Caco-2 (cell line): ENCODE measurements at regions of chr12 and their contacts with region 1.

Region 1: GRCh38 chr12:63103494-63104131 is 47.4 kb downstream of the AVPR1A start:
- DNase-seq: peak in 1 of 2 experiments; percentile 31
- H3K4me3 ChIP-seq: no peak overlapping the region
- H3K4me3 Mint-ChIP-seq: no peak overlapping the region
- H3K27ac Mint-ChIP-seq: no peak overlapping the region
- H3K4me1 ChIP-seq: no peaks in the 10 kb centered on the region
- H3K4me1 Mint-ChIP-seq: no peaks in the 10 kb centered on the region
- H3K27me3 ChIP-seq: no peaks in the 10 kb centered on the region
- H3K27me3 Mint-ChIP-seq: no peaks in the 10 kb centered on the region
- CTCF ChIP-seq: peak; percentile 60 to 84

Region 2: DNA sequence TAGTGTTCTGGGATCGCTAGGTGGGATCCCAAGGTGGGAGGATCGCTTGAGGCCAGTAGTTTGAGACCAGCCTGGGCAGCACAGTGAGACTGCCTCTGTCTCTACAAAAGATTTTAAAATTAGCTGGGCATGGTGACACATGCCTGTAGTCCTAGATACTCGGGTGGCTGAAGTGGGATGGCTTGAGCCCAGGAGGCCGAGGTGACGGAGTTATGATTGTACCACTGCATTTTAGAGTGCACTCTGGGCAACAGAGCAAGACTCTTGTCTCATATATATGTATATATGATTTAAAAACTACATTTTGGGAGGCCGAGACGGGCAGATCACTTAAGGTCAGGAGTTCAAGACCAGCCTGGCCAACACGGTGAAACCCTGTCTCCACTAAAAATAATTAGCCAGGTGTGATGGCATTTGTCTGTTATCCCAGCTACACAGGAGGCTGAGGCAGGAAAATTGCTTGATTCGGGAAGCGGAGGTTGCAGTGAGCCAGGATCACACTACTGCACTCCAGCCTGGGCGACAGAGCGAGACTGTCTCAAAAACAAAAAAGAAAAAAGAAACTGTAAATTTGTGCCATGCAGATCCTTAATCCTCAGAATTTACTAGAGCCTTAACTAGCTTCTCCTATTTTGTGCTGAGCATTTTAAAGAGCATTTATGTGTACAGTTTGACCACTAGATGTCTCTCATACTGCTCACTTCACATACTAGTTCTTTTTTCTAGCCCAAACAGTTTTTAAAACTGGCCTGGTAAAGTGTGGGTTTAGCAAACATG is 522.1 kb before region 1 on chr12:
- CTCF ChIA-PET with region 1: no interaction called
- POLR2A ChIA-PET with region 1: no interaction called
- intact Hi-C with region 1: loop called (anchors 5 kb)
- DNase-seq: peak in 1 of 2 experiments; percentile 14
- H3K4me3 ChIP-seq: no peak overlapping the region
- H3K4me3 Mint-ChIP-seq: no peak overlapping the region
- H3K27ac Mint-ChIP-seq: no peak overlapping the region
- H3K4me1 ChIP-seq: no peaks in the 10 kb centered on the region
- H3K4me1 Mint-ChIP-seq: peaks cover 7% of the 10 kb centered on the region
- H3K27me3 ChIP-seq: no peaks in the 10 kb centered on the region
- H3K27me3 Mint-ChIP-seq: no peaks in the 10 kb centered on the region
- CTCF ChIP-seq: peak; percentile 37 to 75

Region 3: GRCh38 chr12:63068857-63069442 is 34.7 kb before region 1 on chr12:
- CTCF ChIA-PET with region 1: no interaction called
- POLR2A ChIA-PET with region 1: no interaction called
- intact Hi-C with region 1: loop called (anchors 2 kb)
- DNase-seq: peak in 1 of 2 experiments; percentile 39
- H3K4me3 ChIP-seq: no peak overlapping the region
- H3K4me3 Mint-ChIP-seq: no peak overlapping the region
- H3K27ac Mint-ChIP-seq: no peak overlapping the region
- H3K4me1 ChIP-seq: peaks cover 26% of the 10 kb centered on the region
- H3K4me1 Mint-ChIP-seq: peaks cover 33% of the 10 kb centered on the region
- H3K27me3 ChIP-seq: no peaks in the 10 kb centered on the region
- H3K27me3 Mint-ChIP-seq: no peaks in the 10 kb centered on the region
- CTCF ChIP-seq: peak; percentile 61 to 64

Region 4: DNA sequence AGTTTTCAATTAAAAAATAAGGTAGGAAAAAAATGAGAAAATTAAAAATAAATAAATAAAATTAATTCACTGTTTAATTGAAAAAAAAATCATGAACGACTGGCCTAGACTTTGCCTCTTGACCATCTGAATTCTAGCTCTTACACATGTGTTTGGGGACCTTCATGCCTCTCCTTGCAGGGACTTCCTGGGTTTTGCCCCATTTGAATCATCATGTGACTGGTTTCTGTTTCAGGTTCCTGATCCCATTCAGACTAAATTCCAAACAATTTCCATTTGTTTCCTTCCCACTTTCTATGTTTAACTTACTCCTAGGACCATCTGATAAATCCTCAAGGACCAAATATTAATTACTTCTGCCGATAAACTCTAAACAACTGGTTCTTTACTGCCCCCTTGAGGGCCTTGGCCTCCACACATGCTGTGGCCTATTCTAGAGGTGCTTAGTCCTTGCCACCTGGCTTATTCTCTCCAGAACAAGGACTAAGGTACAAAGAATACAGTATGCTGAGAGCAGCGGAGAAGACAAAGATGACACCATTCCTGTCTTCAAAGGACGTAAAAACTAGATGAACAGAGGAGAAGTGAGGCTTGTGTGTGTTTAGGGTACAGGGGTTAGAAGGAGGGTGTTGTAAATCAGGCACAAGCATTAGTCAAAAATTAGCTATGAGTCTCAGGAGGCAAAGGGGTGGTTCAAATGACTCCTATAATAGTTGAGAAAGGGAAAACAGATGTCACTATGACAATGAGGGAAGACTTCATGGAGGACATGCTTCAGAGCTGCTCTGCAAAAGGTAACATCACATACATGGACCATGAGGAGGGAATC is 173.1 kb after region 1 on chr12:
- CTCF ChIA-PET with region 1: no interaction called
- POLR2A ChIA-PET with region 1: no interaction called
- intact Hi-C with region 1: loop called (anchors 1 kb)
- DNase-seq: peak; percentile 56 to 68
- H3K4me3 ChIP-seq: no peak overlapping the region
- H3K4me3 Mint-ChIP-seq: no peak overlapping the region
- H3K27ac Mint-ChIP-seq: no peak overlapping the region
- H3K4me1 ChIP-seq: peaks cover 5% of the 10 kb centered on the region; the same call in 1 of the 2 replicates
- H3K4me1 Mint-ChIP-seq: peaks cover 7% of the 10 kb centered on the region
- H3K27me3 ChIP-seq: no peaks in the 10 kb centered on the region
- H3K27me3 Mint-ChIP-seq: no peaks in the 10 kb centered on the region
- CTCF ChIP-seq: peak; percentile 71

Region 5: GRCh38 chr12:63420206-63420644 is 316.6 kb after region 1 on chr12:
- CTCF ChIA-PET with region 1: no interaction called
- POLR2A ChIA-PET with region 1: no interaction called
- intact Hi-C with region 1: loop called (anchors 1 kb)
- DNase-seq: peak; percentile 45 to 58
- H3K4me3 ChIP-seq: no peak overlapping the region
- H3K4me3 Mint-ChIP-seq: no peak overlapping the region
- H3K27ac Mint-ChIP-seq: no peak overlapping the region
- H3K4me1 ChIP-seq: no peaks in the 10 kb centered on the region
- H3K4me1 Mint-ChIP-seq: peaks cover 7% of the 10 kb centered on the region
- H3K27me3 ChIP-seq: no peaks in the 10 kb centered on the region
- H3K27me3 Mint-ChIP-seq: peaks cover 9% of the 10 kb centered on the region
- CTCF ChIP-seq: peak; percentile 57 to 64

Region 6: DNA sequence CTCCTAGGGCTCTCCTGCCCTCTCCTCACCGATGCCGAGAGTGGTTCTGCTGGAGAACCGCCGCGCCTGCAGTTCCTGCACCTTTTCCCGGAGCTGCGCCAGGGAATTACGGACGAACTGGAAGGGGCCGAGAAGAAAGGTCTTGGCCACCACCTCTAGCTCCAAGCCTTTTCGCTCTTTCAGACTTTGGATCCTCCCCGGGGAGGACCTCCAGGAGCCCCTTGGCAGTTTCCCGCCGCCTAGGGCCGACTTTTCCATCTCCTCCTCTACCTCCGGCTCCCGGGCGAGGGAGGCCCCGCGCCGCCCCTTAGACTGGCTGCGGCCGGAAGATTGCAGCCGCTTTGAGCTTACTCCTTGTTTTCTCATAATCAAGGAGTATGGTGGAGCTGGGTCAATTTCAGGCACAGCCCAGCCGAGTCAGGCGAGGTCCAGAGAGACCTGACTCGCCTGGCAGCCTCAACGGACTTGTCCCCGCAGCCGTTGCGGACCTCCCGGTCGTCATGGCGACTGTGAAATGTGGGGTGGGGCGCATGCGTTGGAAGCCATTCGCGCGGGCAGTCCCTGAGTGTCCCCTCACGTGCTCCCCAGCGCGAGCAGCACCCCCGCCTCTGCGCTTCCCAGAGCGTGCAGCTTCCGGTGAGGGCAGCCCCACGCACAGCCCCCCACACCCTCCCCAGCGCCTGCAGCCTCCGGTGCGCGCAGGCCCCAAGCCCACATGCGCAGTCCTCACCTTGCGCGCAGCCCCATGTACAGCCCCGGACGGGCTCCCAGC is 564.6 kb after region 1 on chr12 and contains the start of gene DPY19L2:
- CTCF ChIA-PET with region 1: no interaction called
- POLR2A ChIA-PET with region 1: no interaction called
- intact Hi-C with region 1: loop called (anchors 10 kb)
- DNase-seq: no peak
- H3K4me3 ChIP-seq: no peak within 1 kb of the TSS
- H3K4me3 Mint-ChIP-seq: no peak within 1 kb of the TSS
- H3K27ac Mint-ChIP-seq: no peak within 1 kb of the TSS
- H3K4me1 ChIP-seq: no peaks in the 10 kb centered on the region
- H3K4me1 Mint-ChIP-seq: no peaks in the 10 kb centered on the region
- H3K27me3 ChIP-seq: no peaks in the 10 kb centered on the region
- H3K27me3 Mint-ChIP-seq: peaks cover 9% of the 10 kb centered on the region
- CTCF ChIP-seq: no peak
- total RNA-seq, gene DPY19L2: not detected in 2 replicates

Region 7: GRCh38 chr12:63706336-63706735 is 602.7 kb after region 1 on chr12:
- CTCF ChIA-PET with region 1: no interaction called
- POLR2A ChIA-PET with region 1: no interaction called
- intact Hi-C with region 1: no loop called
- DNase-seq: no peak
- H3K4me3 ChIP-seq: no peak overlapping the region
- H3K4me3 Mint-ChIP-seq: no peak overlapping the region
- H3K27ac Mint-ChIP-seq: no peak overlapping the region
- H3K4me1 ChIP-seq: no peaks in the 10 kb centered on the region
- H3K4me1 Mint-ChIP-seq: no peaks in the 10 kb centered on the region
- H3K27me3 ChIP-seq: no peaks in the 10 kb centered on the region
- H3K27me3 Mint-ChIP-seq: peaks cover 13% of the 10 kb centered on the region
- CTCF ChIP-seq: no peak

Region 8: GRCh38 chr12:64412459-64412858 is 1308.8 kb after region 1 on chr12:
- CTCF ChIA-PET with region 1: no interaction called
- POLR2A ChIA-PET with region 1: no interaction called
- intact Hi-C with region 1: no loop called
- DNase-seq: no peak
- H3K4me3 ChIP-seq: no peak overlapping the region
- H3K4me3 Mint-ChIP-seq: no peak overlapping the region
- H3K27ac Mint-ChIP-seq: no peak overlapping the region
- H3K4me1 ChIP-seq: no peaks in the 10 kb centered on the region
- H3K4me1 Mint-ChIP-seq: peaks cover 3% of the 10 kb centered on the region
- H3K27me3 ChIP-seq: no peaks in the 10 kb centered on the region
- H3K27me3 Mint-ChIP-seq: no peaks in the 10 kb centered on the region
- CTCF ChIP-seq: no peak